Motor neuron (in vitro differentiated cells): ENCODE measurements at regions of chr2 and their contacts with region 1.

Region 1: GRCh38 chr2:176638167-176639015 is 369.1 kb downstream of the MTX2 start:
- ATAC-seq: peak; percentile 65 to 96 (median 90)
- H3K4me3 ChIP-seq: peak overlapping the region; percentile 46 to 56 (median 49)
- H3K27ac ChIP-seq: no peak overlapping the region
- H3K4me1 ChIP-seq: peaks cover 0 to 22% of the 10 kb centered on the region in 2 donors

Region 2: DNA sequence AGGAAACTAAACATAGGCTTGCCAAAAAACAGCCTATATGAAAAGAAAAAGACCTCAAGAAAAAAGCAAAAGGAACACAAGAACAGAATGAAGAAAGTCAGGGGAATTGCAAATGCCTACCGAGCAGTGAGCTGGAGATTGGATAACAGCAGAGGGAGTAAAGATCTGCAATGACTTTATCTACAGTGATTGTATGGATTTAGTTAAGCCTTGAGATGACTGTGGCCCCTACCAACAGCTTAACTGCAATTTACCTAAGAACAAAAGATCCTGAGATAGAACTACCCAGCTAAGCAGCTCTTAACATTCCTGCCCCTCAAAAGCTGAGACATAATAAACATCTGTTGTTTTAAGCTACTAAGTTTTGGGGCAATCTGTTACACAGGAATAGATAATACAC is 656.8 kb before region 1 on chr2:
- in situ Hi-C with region 1: no loop called
- ATAC-seq: no peak
- H3K4me3 ChIP-seq: no peak overlapping the region
- H3K27ac ChIP-seq: no peak overlapping the region
- H3K4me1 ChIP-seq: peaks cover 0 to 7% of the 10 kb centered on the region in 2 donors

Region 3: GRCh38 chr2:176491172-176491904 is 147.1 kb before region 1 on chr2:
- in situ Hi-C with region 1: loop called in 1 of 9 experiments (anchors 25 kb)
- ATAC-seq: peak in 3 of 8 experiments; percentile 87 to 97 (median 91)
- H3K4me3 ChIP-seq: no peak overlapping the region
- H3K27ac ChIP-seq: peak overlapping the region in 1 of 2 donors; percentile 96
- H3K4me1 ChIP-seq: peaks cover 51 to 55% of the 10 kb centered on the region in 2 donors

Region 4: DNA sequence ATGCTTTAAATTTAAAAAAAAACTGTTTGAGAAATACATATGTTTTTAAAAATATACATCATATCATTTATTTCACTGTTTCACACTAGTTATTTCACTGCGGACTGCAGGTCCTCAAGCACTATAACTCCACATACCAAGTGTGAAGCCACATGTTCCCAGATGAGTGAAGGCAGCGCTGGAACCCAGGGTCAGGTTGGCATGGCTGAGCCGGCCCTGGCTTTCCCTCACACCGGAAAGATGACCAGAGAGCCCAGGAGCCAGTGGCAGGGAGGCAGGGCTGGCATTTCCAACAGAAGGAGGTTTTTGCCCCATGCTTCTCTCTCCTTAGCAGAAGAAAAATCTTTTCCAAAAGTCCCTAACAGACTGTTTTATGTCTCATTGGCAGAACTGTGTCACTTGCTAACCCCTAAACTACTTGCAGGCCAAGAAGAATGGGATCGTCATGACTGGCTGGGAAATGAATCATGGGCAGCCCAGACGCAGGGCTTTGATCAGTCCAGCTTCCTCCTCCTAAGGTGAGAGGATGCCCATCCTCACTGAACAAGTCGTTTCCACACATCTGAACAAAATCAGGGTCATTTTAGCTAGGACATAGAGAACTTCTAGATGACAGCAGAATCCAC is 286.6 kb after region 1 on chr2:
- in situ Hi-C with region 1: no loop called
- ATAC-seq: no peak
- H3K4me3 ChIP-seq: no peak overlapping the region
- H3K27ac ChIP-seq: no peak overlapping the region
- H3K4me1 ChIP-seq: no peaks in the 10 kb centered on the region